Activated CD4-positive, alpha-beta memory T cell treated with anti-CD3 and anti-CD28 coated beads for 36 hours (primary cell): ENCODE measurements at regions of chr11 and their contacts with region 1.

Region 1: GRCh38 chr11:19441752-19442553 is 201.2 kb upstream of the E2F8 start:
- DNase-seq: peak; percentile 85
- H3K4me3 Mint-ChIP-seq: no peak overlapping the region
- H3K27ac Mint-ChIP-seq: peak overlapping the region; percentile 18
- H3K4me1 Mint-ChIP-seq: peaks cover 15% of the 10 kb centered on the region
- H3K27me3 Mint-ChIP-seq: peaks cover 51% of the 10 kb centered on the region

Region 2: DNA sequence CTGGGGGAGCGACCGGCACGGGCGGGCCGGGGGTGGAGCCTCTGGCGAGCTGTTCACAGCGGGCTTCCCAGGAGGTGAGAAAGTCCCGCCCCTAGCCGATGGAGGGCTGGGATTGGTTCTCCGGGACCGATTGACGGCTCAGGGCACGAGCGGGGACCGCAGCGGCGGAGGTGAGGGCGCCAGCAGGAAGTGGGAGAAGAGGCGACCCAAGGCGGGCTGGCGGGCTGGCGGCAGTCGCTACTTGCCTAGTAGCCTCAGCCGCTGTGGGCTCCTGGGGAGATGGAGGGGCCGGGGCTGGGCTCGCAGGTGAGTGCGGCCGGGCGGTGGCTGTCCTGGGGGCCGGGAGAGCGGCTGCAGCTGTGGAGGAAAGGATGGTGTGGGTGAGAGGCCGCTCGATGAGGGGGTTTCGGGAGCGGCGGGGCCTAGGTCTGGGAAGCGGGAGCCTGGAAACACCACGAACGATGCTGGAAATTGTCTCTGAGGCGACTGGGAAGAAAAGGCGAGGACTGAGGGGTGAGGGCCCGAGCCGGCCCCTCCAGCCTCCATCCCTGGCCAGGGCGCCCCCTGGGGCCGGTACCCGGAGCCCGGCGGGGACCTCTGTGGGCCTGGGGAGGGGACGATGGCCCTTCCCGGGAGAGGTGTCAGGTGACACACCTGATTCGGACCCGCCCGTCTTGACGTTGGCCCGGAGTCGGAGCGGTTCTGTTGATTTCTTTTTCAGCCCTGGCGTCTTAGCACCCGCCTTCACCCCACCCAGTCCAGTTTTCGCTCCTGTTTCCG is 324.8 kb before region 1 on chr11 and contains the start of gene ZDHHC13:
- CTCF ChIA-PET with region 1: no interaction called
- POLR2A ChIA-PET with region 1: no interaction called
- intact Hi-C with region 1: loop called (anchors 5 kb)
- DNase-seq: peak; percentile 98
- H3K4me3 Mint-ChIP-seq: peak within 1 kb of the TSS; percentile 89
- H3K27ac Mint-ChIP-seq: peak within 1 kb of the TSS; percentile 67
- H3K4me1 Mint-ChIP-seq: peaks cover 45% of the 10 kb centered on the region
- H3K27me3 Mint-ChIP-seq: no peaks in the 10 kb centered on the region
- total RNA-seq, gene ZDHHC13: 25.4 to 26.8 TPM

Region 3: GRCh38 chr11:19240420-19241259 is 201.3 kb before region 1 on chr11 and contains the start of gene E2F8:
- CTCF ChIA-PET with region 1: no interaction called
- POLR2A ChIA-PET with region 1: no interaction called
- intact Hi-C with region 1: loop called (anchors 2 kb)
- DNase-seq: peak; percentile 95
- H3K4me3 Mint-ChIP-seq: peak within 1 kb of the TSS; percentile 88
- H3K27ac Mint-ChIP-seq: peak within 1 kb of the TSS; percentile 74
- H3K4me1 Mint-ChIP-seq: peaks cover 20% of the 10 kb centered on the region
- H3K27me3 Mint-ChIP-seq: peaks cover 31% of the 10 kb centered on the region
- total RNA-seq, gene E2F8: 16.0 to 16.5 TPM

Region 4: DNA sequence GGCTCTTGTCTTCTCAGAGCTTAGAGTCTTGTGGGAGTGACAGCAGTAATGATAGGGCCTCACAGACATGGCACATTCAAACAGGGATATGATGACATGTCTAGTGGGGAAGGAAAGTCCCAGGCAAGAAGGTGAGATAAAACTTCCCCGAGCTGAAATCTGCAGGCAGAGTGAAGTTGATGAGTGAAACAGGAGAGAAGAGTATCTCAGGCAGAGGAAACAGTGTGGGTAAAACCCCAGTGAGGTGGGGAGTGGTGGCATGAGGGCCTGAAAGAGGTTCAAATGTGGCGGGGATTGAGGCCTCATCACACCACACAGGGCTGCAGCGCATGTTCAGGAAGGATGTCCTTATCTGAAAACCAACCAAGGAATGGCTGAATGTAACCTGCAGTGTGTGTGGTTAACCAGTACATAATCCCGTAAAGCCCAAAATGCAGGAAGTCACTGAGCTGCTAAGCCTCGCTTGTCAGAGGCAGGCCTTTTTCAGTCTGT is 47.4 kb before region 1 on chr11:
- CTCF ChIA-PET with region 1: no interaction called
- POLR2A ChIA-PET with region 1: interaction called, 3 read pairs
- intact Hi-C with region 1: loop called (anchors 1 kb)
- DNase-seq: peak; percentile 51
- H3K4me3 Mint-ChIP-seq: no peak overlapping the region
- H3K27ac Mint-ChIP-seq: peak overlapping the region; percentile 38
- H3K4me1 Mint-ChIP-seq: peaks cover 5% of the 10 kb centered on the region
- H3K27me3 Mint-ChIP-seq: peaks cover 12% of the 10 kb centered on the region

Region 5: DNA sequence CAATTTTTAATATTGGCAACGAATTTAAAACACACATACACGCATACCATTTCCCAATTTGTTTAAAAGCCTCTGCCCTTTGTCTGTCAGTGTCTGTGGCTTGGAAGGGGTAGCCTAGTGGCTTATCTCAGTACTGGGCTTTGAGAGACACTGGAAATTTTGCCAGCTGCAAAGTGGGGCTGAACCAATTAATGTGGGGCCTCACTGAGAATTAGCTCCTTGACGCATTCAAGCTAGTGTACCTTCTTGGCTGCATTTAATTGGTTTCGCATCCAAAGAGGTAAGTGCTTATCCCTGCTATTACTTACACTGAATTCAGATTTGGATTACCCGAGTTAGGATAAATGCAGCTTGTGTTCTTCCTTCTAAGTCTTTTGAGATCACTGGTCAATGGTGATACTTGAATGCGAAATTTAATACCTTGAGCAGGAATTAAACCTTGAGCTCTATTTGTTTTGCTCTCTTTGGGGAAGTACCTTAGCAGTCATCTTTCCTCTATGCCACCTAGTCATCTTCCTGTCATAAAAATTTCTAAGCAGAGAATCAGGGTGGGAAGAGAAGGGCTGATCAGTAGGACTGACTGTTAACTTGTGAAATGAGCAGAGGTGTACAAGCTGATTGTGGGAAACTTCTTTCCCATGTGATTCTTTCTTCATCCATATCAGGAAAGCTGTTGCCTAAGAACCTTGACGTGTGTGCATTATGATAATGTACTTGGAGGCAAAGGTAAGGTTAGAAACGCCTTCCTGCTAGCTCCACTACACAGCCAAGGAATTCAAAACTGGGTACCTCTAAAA is 13.5 kb before region 1 on chr11:
- CTCF ChIA-PET with region 1: no interaction called
- POLR2A ChIA-PET with region 1: no interaction called
- intact Hi-C with region 1: no loop called
- DNase-seq: no peak
- H3K4me3 Mint-ChIP-seq: no peak overlapping the region
- H3K27ac Mint-ChIP-seq: no peak overlapping the region
- H3K4me1 Mint-ChIP-seq: no peaks in the 10 kb centered on the region
- H3K27me3 Mint-ChIP-seq: peaks cover 41% of the 10 kb centered on the region

Region 6: DNA sequence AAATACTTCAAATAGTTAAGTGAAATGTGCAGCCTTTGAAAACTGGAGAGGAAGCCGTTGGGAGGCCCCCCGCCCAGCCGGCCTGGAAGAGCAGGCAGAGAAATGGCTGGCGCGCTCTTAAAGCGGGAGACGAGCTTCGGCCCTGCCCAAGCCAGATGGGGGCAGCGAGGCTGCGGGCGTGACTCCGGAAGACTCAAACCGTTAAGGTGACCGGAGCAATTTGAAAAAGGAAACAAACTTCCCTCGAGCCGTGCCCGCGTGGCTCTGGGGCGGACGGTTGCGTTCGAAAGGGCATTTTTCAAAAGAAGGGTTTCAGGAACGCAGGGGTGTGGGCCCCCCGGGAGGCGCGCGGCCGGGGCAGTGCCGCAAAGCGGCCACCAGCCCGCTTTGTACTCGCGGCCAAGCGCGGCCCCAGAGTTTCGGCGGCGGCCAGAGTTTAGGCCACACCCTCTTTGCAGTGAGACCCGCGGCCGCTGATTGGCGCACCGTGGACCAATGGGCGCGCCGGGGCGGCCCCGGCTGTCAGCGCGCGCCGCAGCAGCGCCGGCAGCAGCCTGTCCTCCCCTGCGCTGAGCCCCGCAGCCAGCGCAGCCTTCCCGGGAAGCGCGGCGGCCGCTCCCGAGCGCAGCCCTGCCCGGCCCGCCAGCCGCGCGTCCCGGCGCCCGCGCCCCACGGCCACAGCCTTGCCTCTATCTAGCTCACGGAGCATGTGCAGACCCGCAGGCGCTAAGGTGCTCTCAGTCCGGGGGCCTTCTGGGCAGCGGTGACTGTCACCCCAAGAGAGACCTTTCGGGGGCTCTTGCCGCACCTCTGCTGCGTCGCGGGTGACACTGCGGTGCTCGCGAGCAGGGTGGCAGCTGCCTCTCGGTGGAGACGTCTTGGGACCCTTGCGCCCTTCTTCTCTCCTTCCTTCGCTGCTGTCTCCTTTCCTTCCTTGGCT is 270.6 kb after region 1 on chr11 and contains the start of gene NAV2:
- CTCF ChIA-PET with region 1: no interaction called
- POLR2A ChIA-PET with region 1: no interaction called
- intact Hi-C with region 1: loop called (anchors 2 kb)
- DNase-seq: peak; percentile 85
- H3K4me3 Mint-ChIP-seq: peak within 1 kb of the TSS; percentile 81
- H3K27ac Mint-ChIP-seq: peak within 1 kb of the TSS; percentile 78
- H3K4me1 Mint-ChIP-seq: peaks cover 23% of the 10 kb centered on the region
- H3K27me3 Mint-ChIP-seq: peaks cover 16% of the 10 kb centered on the region
- total RNA-seq, gene NAV2: 0.75 to 0.86 TPM

Region 7: DNA sequence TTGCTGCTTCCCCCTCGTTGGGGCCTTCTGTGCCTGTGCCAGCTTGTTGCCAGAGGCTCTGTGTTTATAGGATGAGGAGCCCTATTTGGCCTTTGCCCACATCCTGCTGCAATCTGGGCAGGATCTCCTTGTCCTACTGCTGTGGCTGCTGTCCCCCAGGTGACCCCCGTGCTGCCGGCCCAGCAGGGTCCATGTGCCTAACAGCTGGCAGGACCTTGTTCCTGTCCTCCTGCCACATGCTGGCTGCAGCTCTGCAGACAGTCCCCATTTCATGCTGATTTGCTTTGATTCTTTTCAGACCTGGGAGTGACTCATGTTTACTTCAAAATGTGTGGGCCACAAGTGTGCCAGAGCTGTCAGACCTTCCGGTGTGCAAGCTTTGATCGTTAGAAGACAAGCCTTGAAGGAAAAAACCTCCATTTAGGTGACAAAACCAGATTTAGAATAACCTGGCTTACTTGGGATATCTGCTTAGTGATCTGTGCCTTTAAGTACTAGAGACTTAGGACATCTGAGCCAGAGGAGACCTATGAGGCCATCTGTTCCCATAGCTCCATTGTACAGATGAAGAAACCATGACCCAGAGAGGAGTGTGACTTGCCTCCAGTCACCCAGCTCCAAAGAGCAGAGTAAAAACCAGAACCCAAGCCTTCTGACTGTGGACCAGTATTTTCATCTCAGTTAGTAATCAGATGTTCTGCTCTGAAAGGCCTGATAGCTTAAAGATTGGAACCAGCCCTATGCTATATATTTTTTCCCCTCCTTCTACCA is 281.8 kb after region 1 on chr11:
- CTCF ChIA-PET with region 1: no interaction called
- POLR2A ChIA-PET with region 1: no interaction called
- intact Hi-C with region 1: loop called (anchors 2 kb)
- DNase-seq: peak; percentile 71
- H3K4me3 Mint-ChIP-seq: peak overlapping the region; percentile 18
- H3K27ac Mint-ChIP-seq: peak overlapping the region; percentile 86
- H3K4me1 Mint-ChIP-seq: peaks cover 29% of the 10 kb centered on the region
- H3K27me3 Mint-ChIP-seq: no peaks in the 10 kb centered on the region

Region 8: GRCh38 chr11:19978668-19979518 is 536.9 kb after region 1 on chr11:
- CTCF ChIA-PET with region 1: no interaction called
- POLR2A ChIA-PET with region 1: no interaction called
- intact Hi-C with region 1: loop called (anchors 10 kb)
- DNase-seq: peak; percentile 39
- H3K4me3 Mint-ChIP-seq: no peak overlapping the region
- H3K27ac Mint-ChIP-seq: peak overlapping the region; percentile 26
- H3K4me1 Mint-ChIP-seq: peaks cover 10% of the 10 kb centered on the region
- H3K27me3 Mint-ChIP-seq: peaks cover 3% of the 10 kb centered on the region